Ovary (tissue), 10 donors: ENCODE measurements at regions of chr9 and their contacts with region 1.

Region 1: DNA sequence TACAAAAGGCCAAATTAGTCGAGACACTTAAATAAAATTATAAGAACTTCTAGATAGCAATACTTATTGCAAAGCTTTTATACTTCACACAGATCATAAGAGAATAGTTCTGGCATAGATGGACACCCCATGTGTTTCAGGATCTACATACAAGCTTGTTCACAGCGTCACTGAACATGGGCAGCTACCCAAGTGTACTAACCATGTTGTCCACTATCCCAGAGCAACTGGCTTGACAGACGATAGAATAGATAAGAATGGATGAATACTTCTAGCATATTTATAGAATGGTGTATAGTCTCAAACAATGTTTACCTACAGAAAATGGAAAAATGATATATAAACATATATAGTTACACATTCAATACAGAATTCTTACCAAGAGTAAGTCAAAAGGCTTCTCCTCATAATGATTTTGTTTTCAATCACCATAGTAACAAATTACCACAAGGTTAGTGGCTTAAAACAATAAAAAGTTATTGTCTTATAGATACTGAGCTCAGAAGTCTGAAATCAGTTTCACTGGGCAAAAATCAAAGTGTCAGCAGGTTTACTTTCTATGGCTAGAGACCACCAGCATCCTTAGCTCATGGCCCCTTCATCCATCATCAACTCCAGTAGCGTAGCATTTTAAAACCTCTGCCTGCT is 446.7 kb downstream of the DMRTA1 start:
- DNase-seq: no peak
- H3K4me3 ChIP-seq: no peak overlapping the region
- H3K27ac ChIP-seq: no peak overlapping the region
- H3K4me1 ChIP-seq: no peaks in the 10 kb centered on the region
- H3K27me3 ChIP-seq: no peaks in the 10 kb centered on the region
- CTCF ChIP-seq: no peak
- EP300 ChIP-seq: no peak
- POLR2A ChIP-seq: no peak

Region 2: DNA sequence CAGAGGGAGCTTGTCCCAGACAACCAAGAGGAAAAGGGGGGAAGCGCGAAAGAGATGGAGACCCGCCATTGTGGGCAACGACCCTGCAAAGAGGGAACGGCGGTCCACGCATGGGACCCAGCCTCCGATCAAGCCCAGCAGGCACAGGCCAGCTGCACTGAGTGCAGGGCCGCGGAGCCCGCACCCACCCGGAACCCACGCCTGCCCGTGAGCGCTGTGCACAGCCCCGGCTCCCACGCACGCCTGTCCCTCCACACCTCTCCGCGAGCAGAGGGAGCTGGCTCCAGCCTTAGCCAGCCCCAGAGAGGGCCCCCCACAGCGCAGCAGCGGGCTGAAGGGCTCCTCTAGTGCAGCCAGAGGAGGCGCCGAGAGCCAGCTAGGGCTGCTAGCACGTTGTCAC is 30.2 kb before region 1 on chr9:
- intact Hi-C with region 1: loop called in 1 of 4 experiments (anchors 1 kb)
- DNase-seq: no peak
- H3K4me3 ChIP-seq: no peak overlapping the region
- H3K27ac ChIP-seq: no peak overlapping the region
- H3K4me1 ChIP-seq: no peaks in the 10 kb centered on the region
- H3K27me3 ChIP-seq: no peaks in the 10 kb centered on the region
- CTCF ChIP-seq: no peak
- EP300 ChIP-seq: no peak
- POLR2A ChIP-seq: no peak

Region 3: DNA sequence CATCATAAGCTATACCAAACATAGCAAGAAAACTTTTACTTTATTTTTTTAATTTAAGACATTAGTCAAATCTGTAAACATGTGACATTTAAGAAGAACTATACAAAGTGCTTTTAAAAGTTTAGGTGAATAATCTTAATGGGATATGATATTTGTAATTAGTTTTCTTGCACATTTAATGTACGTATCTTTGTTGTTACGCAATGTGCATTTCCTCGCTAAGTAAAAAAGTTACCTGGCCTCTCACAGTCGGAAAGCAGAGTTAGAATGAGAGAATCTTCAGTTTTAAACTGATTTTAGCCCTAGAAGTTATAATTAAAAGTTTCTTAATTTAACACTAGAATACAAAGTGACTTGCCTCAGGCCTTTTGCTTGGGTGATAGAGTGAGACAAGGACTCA is 143.1 kb after region 1 on chr9:
- intact Hi-C with region 1: no loop called
- DNase-seq: no peak
- H3K4me3 ChIP-seq: no peak overlapping the region
- H3K27ac ChIP-seq: no peak overlapping the region
- H3K4me1 ChIP-seq: no peaks in the 10 kb centered on the region
- H3K27me3 ChIP-seq: no peaks in the 10 kb centered on the region
- CTCF ChIP-seq: no peak
- EP300 ChIP-seq: no peak
- POLR2A ChIP-seq: no peak

Region 4: GRCh38 chr9:23357651-23358050 is 464.3 kb after region 1 on chr9:
- intact Hi-C with region 1: no loop called
- DNase-seq: no peak
- H3K4me3 ChIP-seq: no peak overlapping the region
- H3K27ac ChIP-seq: no peak overlapping the region
- H3K4me1 ChIP-seq: no peaks in the 10 kb centered on the region
- H3K27me3 ChIP-seq: no peaks in the 10 kb centered on the region
- CTCF ChIP-seq: no peak
- EP300 ChIP-seq: no peak
- POLR2A ChIP-seq: no peak